ENCODE measurements at regions of chr2 and their contacts with region 1.

Region 1: DNA sequence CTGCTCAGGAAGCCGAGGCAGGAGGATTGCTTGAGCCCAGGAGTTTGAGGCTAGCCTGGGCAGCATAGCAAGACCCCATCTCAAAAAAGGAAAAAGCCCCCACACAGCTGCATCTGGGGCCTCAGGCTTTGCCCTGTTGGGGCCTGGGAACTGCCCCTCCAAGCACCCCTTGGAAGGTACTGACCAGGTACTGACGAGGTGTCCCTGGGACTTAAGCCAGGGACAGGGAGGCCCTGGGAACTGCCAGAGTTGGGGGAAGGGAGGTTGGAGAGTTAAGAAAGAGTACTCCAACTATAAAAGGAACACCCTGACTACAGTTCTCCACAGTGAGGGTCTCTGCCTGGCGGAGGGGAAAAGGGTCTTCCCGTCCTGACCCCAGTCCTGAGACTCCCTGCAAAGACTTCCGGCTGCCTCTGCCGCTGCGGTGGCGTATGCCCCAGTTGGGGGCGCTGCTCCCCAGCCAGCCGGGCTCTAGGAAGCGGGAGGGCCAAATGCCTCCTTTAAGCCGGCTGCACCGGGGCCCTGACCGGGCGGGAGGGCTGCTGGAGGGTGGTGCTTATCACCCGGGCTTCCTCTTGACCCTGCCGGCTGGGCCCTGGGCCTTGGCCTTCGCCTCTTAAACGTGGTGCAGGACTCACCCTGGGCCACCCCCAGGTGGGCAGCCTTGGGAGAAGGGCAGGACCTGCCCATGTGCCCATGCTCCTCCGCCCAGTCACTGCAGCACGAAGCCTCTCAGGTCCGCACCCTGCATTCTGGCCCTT is 12.8 kb downstream of the SLC30A3 start:
- H3K4me3 Mint-ChIP-seq: no peak overlapping the region
- H3K27ac Mint-ChIP-seq: no peak overlapping the region
- H3K4me1 Mint-ChIP-seq: no peaks in the 10 kb centered on the region
- H3K27me3 Mint-ChIP-seq: peaks cover 39% of the 10 kb centered on the region

Region 2: DNA sequence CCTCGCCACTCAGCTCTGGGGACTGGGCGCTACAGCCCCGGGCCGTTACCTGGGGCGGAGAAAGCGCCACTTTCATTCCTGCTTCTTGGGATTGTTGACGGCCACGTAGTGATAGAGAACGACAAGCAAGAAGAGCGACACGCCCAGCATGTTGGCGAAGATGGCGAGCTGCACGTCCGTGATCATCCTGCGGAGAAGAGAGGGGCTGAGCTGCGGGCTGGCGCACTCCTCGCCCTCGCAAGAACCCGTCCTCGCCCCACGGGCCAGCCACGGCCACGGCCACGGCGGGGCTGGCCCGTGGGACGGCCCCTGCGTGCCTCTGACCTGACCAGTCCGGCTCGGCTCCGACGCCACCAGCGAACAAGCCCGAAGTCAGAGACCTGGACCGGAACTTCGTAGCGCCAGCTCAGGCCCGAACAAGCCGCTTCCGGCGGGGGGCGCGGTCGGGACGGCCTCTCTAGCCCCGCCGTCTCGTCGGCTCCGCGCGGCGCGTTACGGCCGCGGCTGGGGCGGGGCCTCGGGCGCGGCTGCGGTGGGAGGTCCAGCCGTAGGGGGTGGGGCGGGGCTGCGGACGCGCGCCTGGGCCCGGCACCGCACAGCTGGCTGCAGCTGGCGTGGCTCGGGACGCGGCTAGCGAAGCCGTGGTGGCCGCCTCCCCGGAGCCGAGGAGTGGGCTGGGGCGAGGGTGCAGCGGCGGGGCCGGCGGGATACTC is 178.6 kb before region 1 on chr2 and contains the start of gene OST4:
- intact Hi-C with region 1: no loop called
- H3K4me3 Mint-ChIP-seq: peak within 1 kb of the TSS; percentile 91
- H3K27ac Mint-ChIP-seq: peak within 1 kb of the TSS; percentile 86
- H3K4me1 Mint-ChIP-seq: peaks cover 70% of the 10 kb centered on the region
- H3K27me3 Mint-ChIP-seq: no peaks in the 10 kb centered on the region

Region 3: GRCh38 chr2:27280826-27281225 is 30.8 kb after region 1 on chr2:
- intact Hi-C with region 1: loop called (anchors 1 kb)
- H3K4me3 Mint-ChIP-seq: no peak overlapping the region
- H3K27ac Mint-ChIP-seq: no peak overlapping the region
- H3K4me1 Mint-ChIP-seq: peaks cover 10% of the 10 kb centered on the region
- H3K27me3 Mint-ChIP-seq: peaks cover 23% of the 10 kb centered on the region

Region 4: DNA sequence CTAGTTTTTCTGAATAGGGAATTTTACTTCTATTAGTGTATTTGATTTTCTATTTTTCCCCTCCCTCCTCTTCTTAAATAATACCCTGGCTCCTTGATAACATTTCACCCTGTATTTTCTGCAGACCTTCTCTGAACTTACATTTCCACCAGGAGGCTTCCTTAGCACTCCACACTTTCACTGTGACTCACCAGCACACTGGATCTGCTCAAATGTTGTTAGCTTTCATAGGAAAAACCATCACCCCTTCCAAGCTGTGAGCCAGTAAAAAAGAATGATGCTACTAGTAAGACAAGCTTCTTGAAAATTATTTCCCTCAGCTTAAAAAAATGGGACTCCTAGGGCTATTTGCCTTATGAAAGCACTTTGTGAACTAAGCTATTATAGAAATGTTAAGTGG is 397.2 kb after region 1 on chr2:
- intact Hi-C with region 1: no loop called
- H3K4me3 Mint-ChIP-seq: no peak overlapping the region
- H3K27ac Mint-ChIP-seq: no peak overlapping the region
- H3K4me1 Mint-ChIP-seq: no peaks in the 10 kb centered on the region
- H3K27me3 Mint-ChIP-seq: no peaks in the 10 kb centered on the region

Measured in dendritic cell treated with granulocyte-macrophage colony-stimulating factor and Interleukin-4, amounts not matched to agents 40 ng/mL and 50 ng/mL, for 4 days (primary cell).